ENCODE measurements at regions of chr7 and their contacts with region 1.

Region 1: DNA sequence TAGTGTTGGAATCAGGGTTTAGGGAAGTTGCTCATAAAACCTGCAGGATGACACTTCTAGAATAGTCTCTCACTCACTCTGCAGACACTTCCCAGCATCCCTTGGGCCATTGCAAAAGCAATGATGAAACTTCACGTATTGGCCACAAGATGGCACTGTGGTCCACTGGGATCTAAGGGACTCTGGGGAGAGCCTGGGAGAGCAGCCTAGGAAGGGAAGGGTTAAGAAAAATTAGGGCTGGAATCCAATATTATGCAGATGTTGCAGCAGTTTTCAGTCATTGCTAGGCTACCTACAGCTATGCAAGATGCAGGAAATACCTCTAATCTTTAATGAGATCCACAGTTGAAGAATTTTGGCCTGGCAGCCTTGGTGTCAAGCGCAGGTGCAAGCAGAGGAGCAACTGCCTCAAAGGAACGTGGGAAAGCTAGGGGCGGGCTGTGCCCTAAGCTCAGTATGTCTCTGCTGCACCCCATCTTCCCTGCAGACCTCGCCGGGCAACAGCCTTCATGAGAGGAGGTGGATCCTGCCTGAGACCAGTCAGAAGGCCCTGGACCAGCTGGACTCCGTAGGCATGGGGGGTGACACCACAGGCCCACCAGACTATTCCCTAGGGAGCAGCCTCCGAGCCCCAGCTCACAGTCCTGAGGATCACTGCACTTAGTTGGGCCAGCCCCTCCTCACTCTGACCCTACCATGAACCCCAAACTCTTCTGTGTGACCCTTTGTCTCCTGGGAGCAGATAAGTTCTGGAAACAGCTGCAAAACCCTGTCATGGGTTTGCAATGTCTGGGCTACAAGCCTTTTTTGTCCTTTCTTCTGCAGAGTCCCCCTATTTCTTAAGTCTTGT is 127.9 kb upstream of the PRSS58 start:
- DNase-seq: peak; percentile 13
- ATAC-seq: peak; percentile 94
- H3K4me3 ChIP-seq: no peak overlapping the region
- H3K27ac ChIP-seq: no peak overlapping the region
- H3K4me1 ChIP-seq: no peaks in the 10 kb centered on the region
- H3K27me3 ChIP-seq: no peaks in the 10 kb centered on the region; a peak in 1 of 4 replicates
- CTCF ChIP-seq: peak; percentile 61 to 77 (median 73)
- EP300 ChIP-seq: no peak
- POLR2A ChIP-seq: no peak
- RAD21 ChIP-seq: peak; percentile 52; the same call in 1 of the 2 replicates

Region 2: DNA sequence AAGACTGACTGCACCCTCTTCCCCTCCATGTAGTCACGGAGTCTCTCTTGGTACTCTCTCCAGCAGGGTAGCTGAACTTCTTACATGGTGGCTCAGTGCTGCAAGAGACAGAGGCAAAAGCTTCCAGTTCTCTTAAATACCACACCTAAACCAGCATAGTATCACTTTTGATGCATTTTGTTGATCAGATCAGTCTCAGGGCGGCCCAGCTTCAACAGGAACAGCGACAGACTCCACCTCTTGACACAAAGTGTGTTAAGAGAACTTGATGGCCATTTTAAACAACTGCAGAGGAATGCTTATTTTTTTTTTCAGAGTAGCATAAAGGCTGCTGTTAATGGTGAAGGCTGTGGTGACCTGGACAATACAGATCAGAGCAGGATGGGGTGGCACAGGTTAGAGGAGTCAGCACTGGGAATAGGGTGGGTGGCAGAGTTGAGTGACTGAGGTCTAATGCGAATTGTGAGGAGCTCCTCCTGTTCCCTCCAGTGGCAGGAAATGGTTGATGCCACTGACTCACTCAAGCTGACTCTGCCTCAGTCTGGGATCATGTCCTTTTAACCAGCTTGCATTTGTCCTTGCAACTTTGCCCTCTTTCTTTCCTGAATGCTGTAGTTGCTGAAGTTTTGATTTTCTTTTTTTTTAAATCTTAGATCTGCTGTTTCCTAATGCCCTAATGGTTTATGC is 372.7 kb before region 1 on chr7:
- CTCF ChIA-PET with region 1: no interaction called
- POLR2A ChIA-PET with region 1: no interaction called
- RAD21 ChIA-PET with region 1: no interaction called
- SMC1A ChIA-PET with region 1: no interaction called
- in situ Hi-C with region 1: no loop called
- intact Hi-C with region 1: no loop called
- DNase-seq: no peak
- ATAC-seq: no peak
- H3K4me3 ChIP-seq: no peak overlapping the region
- H3K27ac ChIP-seq: no peak overlapping the region
- H3K4me1 ChIP-seq: no peaks in the 10 kb centered on the region
- H3K27me3 ChIP-seq: no peaks in the 10 kb centered on the region
- CTCF ChIP-seq: no peak
- EP300 ChIP-seq: no peak
- POLR2A ChIP-seq: no peak
- RAD21 ChIP-seq: no peak

Region 3: DNA sequence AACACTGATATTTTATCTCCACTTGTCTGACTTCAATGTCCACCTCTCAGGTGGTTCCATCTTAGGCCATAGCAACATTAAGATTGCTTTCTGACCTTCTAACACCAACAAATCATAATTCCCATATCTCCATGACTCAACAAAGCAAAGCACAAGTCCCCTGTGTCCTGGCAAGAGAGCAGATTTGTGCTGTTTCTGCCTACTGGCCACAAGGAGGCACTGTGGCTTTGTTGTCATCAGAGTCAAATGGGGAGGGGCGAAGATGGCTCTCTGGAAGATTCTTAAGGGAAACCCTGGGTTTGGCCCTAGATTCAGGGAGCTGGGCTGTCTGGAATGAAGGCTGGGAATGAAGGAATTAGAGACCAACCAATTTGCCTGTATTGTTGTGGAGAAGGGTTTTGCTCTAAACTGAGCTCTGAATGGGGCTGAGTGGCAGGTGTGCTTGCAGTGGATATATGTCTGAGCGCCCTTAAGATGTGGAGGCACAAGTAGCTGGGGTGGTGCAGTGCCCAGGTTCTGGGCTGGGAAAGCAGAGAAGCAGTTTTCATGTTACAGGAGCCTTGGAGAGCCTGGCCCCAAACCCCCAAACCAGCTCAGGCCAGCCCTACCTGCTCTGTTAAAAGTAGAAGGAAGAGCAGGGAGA is 27.0 kb after region 1 on chr7:
- CTCF ChIA-PET with region 1: interaction called, 12 read pairs
- POLR2A ChIA-PET with region 1: no interaction called
- RAD21 ChIA-PET with region 1: no interaction called
- SMC1A ChIA-PET with region 1: no interaction called
- in situ Hi-C with region 1: no loop called
- intact Hi-C with region 1: no loop called
- DNase-seq: no peak
- ATAC-seq: peak; percentile 90
- H3K4me3 ChIP-seq: no peak overlapping the region
- H3K27ac ChIP-seq: no peak overlapping the region
- H3K4me1 ChIP-seq: no peaks in the 10 kb centered on the region
- H3K27me3 ChIP-seq: no peaks in the 10 kb centered on the region
- CTCF ChIP-seq: peak; percentile 60 to 87 (median 73)
- EP300 ChIP-seq: no peak
- POLR2A ChIP-seq: no peak
- RAD21 ChIP-seq: peak; percentile 46

Measured in GM12878 (cell line).